ENCODE measurements at regions of chr12 and their contacts with region 1.

Region 1: DNA sequence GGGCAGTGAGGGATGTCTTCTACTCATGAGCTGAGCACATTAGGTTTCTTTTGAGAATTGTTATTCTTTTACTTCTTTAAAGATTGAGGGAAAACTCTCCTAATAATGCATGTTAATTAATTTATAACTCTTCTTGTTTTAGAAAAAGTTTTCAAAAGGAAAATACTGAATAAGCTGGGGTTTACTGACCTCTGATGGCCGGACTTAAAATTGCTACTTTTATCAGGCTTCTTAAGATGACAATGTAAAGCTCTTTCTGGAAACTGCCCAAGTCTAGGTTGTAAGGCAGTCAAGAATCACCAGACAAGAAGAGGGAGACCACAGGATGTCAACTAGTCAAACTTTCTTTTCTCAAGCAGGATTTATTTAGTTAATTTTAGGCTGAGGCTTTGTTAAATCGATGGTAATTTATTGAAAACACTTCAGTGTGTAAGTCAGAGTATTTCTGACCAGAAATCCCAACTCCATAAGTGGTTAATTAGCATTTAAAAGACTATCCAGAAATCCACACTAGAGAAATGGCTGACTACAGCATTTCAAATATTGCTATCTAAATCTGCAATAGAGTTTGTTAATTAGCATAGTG is 82.1 kb downstream of the AVPR1A start:
- DNase-seq: peak; percentile 26

Region 2: GRCh38 chr12:62802984-62803383 is 266.0 kb before region 1 on chr12:
- CTCF ChIA-PET with region 1: interaction called, 21 read pairs
- POLR2A ChIA-PET with region 1: no interaction called
- DNase-seq: peak; percentile 17

Region 3: DNA sequence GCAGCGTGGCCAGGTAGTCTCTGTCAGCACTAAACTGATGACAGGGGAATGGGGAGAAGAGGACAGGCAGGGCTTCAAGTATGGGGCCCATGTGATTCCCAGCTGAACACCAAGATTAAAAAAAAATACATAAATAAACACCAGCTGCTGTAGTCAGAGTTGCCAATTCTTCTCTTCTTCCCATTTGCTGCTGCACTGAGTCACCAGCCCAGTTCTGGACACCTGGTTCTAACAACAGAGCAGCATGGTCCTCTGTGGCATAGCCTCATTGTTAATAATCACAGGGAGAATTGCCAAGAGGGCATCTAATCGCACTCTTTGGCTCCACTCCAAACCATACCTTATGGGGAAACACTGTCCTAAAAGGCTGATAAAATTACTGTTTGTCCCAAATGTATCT is 149.1 kb before region 1 on chr12:
- CTCF ChIA-PET with region 1: no interaction called
- POLR2A ChIA-PET with region 1: no interaction called
- DNase-seq: no peak